ENCODE measurements at regions of chr16 and their contacts with region 1.

Region 1: DNA sequence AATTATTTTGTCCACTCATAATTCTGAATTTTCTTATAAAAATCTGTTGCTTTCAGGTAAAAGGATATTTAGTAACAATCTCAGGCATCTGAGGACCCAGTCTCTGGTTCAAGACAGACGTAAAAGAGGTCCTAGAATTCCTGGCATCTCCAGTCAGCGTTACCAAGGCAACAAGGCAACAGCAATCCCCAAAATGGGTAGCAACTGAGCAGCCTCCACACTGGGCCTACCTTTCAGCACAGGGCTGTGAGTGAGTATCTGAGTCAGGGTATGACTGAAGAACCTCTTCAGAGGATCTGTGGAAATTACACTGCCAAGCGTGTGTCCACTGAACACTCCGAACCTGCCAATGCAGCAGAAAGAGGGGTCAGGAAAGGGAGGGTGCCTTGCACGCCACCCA is 20.8 kb downstream of the FANCA start:
- DNase-seq: no peak
- H3K4me3 ChIP-seq: no peak overlapping the region
- CTCF ChIP-seq: no peak

Region 2: DNA sequence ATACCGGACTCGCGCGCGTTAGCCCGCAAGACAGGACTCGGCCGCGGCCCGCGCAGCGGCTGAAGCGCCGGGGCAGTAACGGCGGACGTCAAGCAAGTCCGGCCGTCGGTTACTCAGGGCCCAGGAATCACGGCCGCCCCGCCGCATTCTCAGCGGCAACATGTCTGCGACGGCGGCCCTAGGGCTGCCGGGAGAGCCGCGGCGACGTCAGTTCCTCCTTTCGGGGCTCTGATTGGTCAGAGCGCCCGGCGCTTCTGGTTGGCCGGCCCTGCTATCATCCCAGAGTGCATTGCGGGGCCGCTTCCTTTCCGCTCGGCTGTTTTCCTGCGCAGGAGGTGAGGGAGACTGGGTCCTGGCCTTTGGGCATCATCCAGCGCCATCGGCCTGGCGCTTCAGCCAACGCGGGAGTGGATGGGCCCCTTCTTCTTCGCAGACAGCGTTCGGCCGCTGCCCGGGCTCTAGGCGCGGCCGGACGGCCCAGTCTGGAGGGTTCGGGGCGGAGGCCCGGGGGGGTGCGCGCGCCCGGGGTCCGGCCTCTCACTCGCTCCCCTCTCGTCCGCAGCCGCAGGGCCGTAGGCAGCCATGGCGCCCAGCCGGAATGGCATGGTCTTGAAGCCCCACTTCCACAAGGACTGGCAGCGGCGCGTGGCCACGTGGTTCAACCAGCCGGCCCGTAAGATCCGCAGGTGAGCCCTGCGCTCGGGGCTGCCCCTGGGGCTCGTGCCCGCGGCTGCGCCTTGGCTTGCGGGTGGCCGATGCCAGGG is 235.1 kb before region 1 on chr16 and contains the start of gene RPL13:
- CTCF ChIA-PET with region 1: no interaction called
- POLR2A ChIA-PET with region 1: no interaction called
- DNase-seq: peak; percentile 71
- H3K4me3 ChIP-seq: peak within 1 kb of the TSS; percentile 85
- CTCF ChIP-seq: no peak

Region 3: GRCh38 chr16:89712274-89712781 is 83.3 kb before region 1 on chr16:
- CTCF ChIA-PET with region 1: interaction called, 101 read pairs
- POLR2A ChIA-PET with region 1: no interaction called
- DNase-seq: no peak
- H3K4me3 ChIP-seq: peak overlapping the region; percentile 62
- CTCF ChIP-seq: no peak

Region 4: DNA sequence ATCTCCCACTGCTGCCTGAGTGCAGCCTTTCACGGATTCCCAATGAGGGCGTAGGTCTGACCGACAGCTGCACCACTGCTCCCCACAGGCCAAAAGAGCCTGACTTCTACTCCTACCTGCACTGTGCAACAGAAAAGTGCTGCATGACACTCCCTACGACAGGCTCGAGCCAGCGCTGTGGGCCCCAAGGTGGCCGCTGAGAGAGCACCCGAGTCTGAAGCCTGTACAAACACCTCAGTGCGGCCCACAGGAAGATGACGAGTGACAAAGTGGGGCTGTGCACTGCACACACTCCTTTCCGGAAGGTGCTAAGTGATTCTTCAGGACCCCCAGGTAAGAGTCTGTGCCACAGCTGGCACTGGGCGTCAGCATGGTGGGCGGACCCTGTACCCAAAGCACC is 20.5 kb before region 1 on chr16:
- CTCF ChIA-PET with region 1: interaction called, 13 read pairs
- POLR2A ChIA-PET with region 1: no interaction called
- DNase-seq: no peak
- H3K4me3 ChIP-seq: no peak overlapping the region
- CTCF ChIP-seq: no peak

Region 5: GRCh38 chr16:89845417-89845816 is 49.7 kb after region 1 on chr16:
- CTCF ChIA-PET with region 1: no interaction called
- POLR2A ChIA-PET with region 1: no interaction called
- DNase-seq: no peak
- H3K4me3 ChIP-seq: no peak overlapping the region
- CTCF ChIP-seq: no peak

Measured in AG04449 (cell line).